Panc1 (cell line): ENCODE measurements at regions of chr3 and their contacts with region 1.

Region 1: GRCh38 chr3:149553781-149554451 is 79.4 kb downstream of the TM4SF4 start:
- DNase-seq: no peak
- ATAC-seq: no peak
- H3K4me3 ChIP-seq: no peak overlapping the region
- H3K27ac ChIP-seq: peak overlapping the region; percentile 100
- H3K4me1 ChIP-seq: peaks cover 93% of the 10 kb centered on the region
- H3K27me3 ChIP-seq: no peaks in the 10 kb centered on the region
- CTCF ChIP-seq: no peak

Region 2: GRCh38 chr3:148981273-148981672 is 572.6 kb before region 1 on chr3:
- CTCF ChIA-PET with region 1: no interaction called
- POLR2A ChIA-PET with region 1: interaction called, 11 read pairs
- in situ Hi-C with region 1: no loop called
- intact Hi-C with region 1: no loop called
- DNase-seq: no peak
- ATAC-seq: no peak
- H3K4me3 ChIP-seq: no peak overlapping the region
- H3K27ac ChIP-seq: no peak overlapping the region
- H3K4me1 ChIP-seq: no peaks in the 10 kb centered on the region
- H3K27me3 ChIP-seq: no peaks in the 10 kb centered on the region; the same call in 1 of the 2 replicates
- CTCF ChIP-seq: no peak

Region 3: GRCh38 chr3:149377408-149378377 is 176.2 kb before region 1 on chr3 and contains the start of gene TM4SF1:
- CTCF ChIA-PET with region 1: no interaction called
- POLR2A ChIA-PET with region 1: interaction called, 18 read pairs
- in situ Hi-C with region 1: no loop called
- intact Hi-C with region 1: no loop called
- DNase-seq: peak; percentile 98
- ATAC-seq: peak; percentile 85
- H3K4me3 ChIP-seq: peak within 1 kb of the TSS; percentile 88 to 97
- H3K27ac ChIP-seq: peak within 1 kb of the TSS; percentile 100
- H3K4me1 ChIP-seq: peaks cover 53% of the 10 kb centered on the region
- H3K27me3 ChIP-seq: no peaks in the 10 kb centered on the region
- CTCF ChIP-seq: no peak
- total RNA-seq, gene TM4SF1: 1,063 TPM

Region 4: DNA sequence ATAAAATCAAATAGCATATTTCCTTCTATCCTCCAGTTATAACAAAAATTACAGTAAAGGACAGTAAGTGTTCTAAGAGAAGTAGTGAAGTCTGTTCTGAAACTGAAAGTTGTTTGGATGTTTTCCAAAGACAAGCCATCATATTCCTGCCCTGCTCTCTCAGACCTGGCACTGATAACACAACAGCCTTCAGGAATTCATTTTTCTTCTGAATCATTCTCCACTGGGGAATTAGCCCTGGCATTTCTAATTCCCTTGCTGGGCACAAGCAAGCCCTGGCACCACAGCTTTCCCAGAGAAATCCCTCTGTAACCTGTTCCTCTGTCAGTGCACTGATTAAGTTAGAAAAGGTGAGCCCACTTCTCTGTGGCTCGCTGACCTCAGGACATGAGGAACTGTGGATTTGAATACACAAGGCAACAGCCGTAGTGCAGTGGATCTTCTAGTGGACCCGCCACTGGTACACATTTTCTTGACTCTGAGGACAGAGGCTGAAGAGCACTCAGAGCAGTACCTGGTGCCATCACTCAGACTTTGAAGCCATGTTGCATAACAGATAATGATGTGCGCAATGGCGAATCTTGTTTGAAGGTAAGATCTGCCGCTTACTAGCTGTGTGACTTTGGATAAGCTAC is 42.3 kb after region 1 on chr3:
- CTCF ChIA-PET with region 1: no interaction called
- POLR2A ChIA-PET with region 1: interaction called, 14 read pairs
- in situ Hi-C with region 1: no loop called
- intact Hi-C with region 1: no loop called
- DNase-seq: no peak
- ATAC-seq: peak; percentile 54
- H3K4me3 ChIP-seq: peak overlapping the region; percentile 1 to 27; a peak in 3 of 4 replicates
- H3K27ac ChIP-seq: peak overlapping the region; percentile 100
- H3K4me1 ChIP-seq: peaks cover 100% of the 10 kb centered on the region
- H3K27me3 ChIP-seq: no peaks in the 10 kb centered on the region
- CTCF ChIP-seq: no peak